ENCODE measurements at regions of chr1 and their contacts with region 1.

Region 1: DNA sequence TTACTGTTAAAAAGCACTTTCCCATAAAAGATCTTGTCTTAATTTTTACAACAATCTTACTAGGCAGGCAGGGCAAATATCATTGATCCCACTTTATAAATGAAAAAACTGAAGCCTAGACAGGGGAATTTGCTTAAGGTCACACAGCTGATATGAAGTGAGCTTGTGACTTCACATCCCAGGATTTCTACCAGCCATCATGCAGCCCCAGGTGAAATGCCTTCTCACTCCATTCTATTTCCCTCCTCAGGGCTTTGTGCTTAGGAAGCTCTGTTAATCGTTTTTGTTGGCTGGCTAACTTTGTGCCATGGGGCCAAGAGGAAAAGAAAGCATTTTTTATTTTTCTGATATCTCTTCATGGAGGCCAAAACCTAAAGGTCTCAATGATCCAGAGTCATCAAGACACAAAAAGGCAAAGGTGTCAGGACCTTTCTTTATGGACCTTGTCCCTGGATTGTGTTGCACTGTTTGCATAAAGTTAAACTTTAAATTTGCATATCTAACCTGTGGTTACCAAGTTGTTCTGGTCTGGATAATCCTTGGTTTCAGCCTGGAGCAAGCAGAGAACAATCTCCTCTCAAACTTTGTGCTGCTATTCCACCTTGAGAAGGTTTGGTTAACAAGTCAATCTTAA is 44.8 kb upstream of the ZNF326 start:
- DNase-seq: no peak
- H3K27ac ChIP-seq: no peak overlapping the region
- CTCF ChIP-seq: no peak

Region 2: DNA sequence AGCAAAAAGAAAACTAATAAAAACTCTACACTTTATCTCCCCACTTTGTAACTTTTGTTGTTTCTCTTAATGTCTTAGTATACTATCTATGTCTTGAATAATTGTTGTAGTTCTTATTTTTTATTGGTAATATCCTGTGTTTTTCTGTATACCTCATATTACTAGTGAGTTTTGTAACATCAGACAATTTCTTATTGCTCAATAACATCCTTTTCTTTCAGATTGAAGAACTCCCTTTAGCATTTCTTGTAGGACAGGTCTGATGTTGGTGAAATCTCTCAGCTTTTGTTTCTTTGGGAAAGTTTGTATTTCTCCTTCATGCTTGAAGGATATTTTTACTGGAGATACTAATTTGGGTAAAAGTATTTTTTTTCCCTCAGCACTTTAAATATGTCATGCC is 505.3 kb before region 1 on chr1:
- CTCF ChIA-PET with region 1: no interaction called
- POLR2A ChIA-PET with region 1: interaction called, 10 read pairs
- DNase-seq: no peak
- H3K27ac ChIP-seq: no peak overlapping the region
- CTCF ChIP-seq: no peak

Region 3: DNA sequence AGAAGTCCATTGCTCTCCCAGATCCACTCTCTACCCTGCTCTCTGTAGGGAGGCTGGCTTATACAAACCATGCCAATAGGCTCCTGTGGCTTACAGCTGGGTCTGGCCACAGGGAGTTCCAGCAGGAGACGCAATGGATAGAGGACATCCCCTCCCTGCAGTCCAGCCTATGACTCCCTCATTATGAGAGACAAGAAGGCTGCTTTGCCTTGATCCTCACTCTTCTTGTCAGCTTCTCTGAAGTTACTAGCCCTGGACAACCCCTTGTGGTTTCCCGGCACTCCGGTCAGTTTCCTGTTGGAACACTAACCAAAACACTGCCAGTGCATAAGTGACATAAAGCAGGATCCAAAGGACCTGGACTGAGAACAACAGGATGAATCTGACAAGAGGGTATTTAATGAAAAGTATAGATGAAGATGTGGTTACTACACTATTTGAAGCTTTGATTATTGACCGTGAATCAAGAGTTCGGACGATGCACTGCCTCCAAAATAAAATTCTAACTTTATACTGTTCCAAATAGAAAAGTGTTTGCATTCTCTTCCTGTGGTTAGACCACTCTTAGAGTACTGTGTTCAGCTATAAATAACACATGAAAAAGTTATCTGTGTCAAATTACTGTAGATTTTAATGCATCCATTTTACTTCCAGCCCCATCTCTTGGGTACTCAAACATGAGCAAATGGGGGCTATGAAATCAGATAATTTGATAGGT is 12.1 kb after region 1 on chr1:
- CTCF ChIA-PET with region 1: no interaction called
- POLR2A ChIA-PET with region 1: no interaction called
- DNase-seq: no peak
- H3K27ac ChIP-seq: no peak overlapping the region
- CTCF ChIP-seq: no peak

Region 4: DNA sequence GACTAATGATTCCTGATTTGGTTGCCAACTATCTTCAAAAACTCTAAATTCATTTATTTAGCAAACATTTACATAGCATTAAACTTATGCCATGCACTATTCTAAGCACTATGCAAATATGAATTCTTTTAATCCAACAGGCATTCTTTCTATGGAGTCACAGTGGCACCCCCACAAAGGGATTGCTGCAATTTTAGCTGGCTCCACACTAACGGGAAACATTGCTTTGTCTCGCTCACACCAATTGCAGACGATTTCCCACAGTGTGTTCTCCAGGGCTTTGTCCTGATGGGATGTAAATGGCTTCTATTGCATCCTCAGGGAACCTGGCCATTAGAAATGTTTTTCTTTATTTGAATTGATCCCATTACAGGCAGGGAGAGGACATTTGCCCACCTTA is 507.9 kb after region 1 on chr1:
- CTCF ChIA-PET with region 1: no interaction called
- POLR2A ChIA-PET with region 1: no interaction called
- DNase-seq: no peak
- H3K27ac ChIP-seq: no peak overlapping the region
- CTCF ChIP-seq: no peak